PC-3 (cell line): ENCODE measurements at regions of chr16 and their contacts with region 1.

Region 1: DNA sequence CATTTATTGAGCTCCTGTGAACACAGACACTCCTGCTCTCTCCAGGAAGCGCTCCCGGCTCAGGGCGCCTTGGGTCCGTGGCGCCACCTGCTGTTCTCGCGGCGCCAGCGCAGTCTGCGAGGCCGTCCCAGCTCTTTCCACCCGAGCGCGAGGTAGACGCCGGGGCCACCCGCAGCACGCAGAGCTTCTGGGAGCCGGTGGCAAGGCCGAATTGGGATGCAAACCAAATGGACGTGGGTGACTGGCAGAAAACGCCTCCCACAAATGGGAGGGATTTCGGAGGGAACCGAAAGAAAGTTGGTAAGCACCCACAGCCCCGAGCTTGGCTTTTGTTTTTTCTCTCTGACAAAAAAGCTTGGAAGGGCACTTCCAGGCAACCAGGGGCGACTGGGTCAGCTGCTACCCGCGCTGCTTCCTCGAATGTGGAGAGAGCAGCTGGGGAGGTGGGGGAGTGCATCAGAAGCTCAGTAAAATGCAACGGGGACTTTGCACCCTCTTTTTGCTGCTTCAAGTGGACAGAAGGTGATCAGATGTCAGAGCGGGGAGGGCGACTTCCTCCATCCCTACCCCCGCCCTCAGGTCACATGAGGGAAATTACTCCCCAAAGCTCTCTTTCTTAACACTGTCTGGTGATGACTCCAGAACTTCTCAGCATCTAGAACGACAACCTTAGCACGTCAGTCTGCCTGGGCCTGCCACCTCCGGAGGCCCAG is 13.5 kb upstream of the N4BP1 start:
- DNase-seq: peak; percentile 84
- ATAC-seq: peak; percentile 99
- H3K4me3 ChIP-seq: peak overlapping the region; percentile 66
- H3K27ac ChIP-seq: no peak overlapping the region
- H3K4me1 ChIP-seq: no peaks in the 10 kb centered on the region
- H3K27me3 ChIP-seq: no peaks in the 10 kb centered on the region
- CTCF ChIP-seq: peak; percentile 86

Region 2: DNA sequence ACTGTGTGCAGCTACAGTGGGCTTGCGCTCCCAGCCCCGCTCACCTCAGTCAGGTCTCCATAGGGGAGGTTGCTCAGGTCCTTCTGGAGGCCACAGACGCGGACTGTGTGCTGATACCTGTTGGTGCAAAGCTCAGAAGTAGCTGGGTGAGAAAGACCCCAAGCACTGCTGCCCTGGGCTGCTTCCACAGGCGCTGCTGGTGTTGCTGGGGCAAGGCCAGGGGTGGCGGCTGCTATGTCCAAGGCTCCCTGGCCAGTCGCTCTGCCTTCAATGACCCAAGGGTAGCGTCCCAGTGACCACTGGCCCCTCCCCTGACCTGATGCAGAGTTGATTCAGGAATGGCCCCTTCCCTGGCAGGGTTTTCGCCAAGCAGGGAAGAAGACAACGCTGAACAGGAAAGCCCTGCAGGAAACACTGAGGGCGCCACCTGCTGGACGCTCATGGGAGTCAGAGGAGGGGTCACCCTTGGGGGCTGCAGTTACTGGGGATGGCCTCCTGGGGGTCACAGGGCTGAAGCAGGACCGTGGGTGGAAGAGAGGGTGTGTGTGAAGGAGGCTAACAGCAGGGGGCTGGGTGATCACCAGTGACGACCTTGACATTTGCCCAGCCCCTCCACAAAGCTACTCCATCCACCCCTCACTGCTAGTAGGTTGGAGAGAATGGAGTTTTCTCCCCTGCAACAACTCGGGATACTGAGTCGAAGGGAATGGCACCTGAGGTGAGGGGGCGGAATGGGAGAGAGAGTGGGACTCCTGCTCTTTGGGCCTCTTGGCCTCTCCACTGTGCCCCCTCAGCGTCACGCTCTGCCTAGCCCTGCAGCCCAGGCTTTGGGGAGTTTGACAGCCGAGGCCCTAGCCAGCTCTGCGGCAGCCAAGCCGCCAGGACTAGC is 506.0 kb before region 1 on chr16:
- CTCF ChIA-PET with region 1: interaction called, 10 read pairs
- POLR2A ChIA-PET with region 1: no interaction called
- intact Hi-C with region 1: no loop called
- DNase-seq: peak; percentile 56
- ATAC-seq: peak; percentile 43; the same call in 1 of the 2 replicates
- H3K4me3 ChIP-seq: no peak overlapping the region
- H3K27ac ChIP-seq: no peak overlapping the region
- H3K4me1 ChIP-seq: peaks cover 7% of the 10 kb centered on the region
- H3K27me3 ChIP-seq: no peaks in the 10 kb centered on the region
- CTCF ChIP-seq: peak; percentile 85

Region 3: GRCh38 chr16:48365581-48366164 is 257.8 kb before region 1 on chr16:
- CTCF ChIA-PET with region 1: interaction called, 3 read pairs
- POLR2A ChIA-PET with region 1: no interaction called
- intact Hi-C with region 1: loop called (anchors 5 kb)
- DNase-seq: peak; percentile 78
- ATAC-seq: peak; percentile 97
- H3K4me3 ChIP-seq: peak overlapping the region; percentile 81
- H3K27ac ChIP-seq: peak overlapping the region; percentile 77
- H3K4me1 ChIP-seq: peaks cover 27% of the 10 kb centered on the region
- H3K27me3 ChIP-seq: no peaks in the 10 kb centered on the region
- CTCF ChIP-seq: no peak; the same call in 1 of the 2 replicates

Region 4: DNA sequence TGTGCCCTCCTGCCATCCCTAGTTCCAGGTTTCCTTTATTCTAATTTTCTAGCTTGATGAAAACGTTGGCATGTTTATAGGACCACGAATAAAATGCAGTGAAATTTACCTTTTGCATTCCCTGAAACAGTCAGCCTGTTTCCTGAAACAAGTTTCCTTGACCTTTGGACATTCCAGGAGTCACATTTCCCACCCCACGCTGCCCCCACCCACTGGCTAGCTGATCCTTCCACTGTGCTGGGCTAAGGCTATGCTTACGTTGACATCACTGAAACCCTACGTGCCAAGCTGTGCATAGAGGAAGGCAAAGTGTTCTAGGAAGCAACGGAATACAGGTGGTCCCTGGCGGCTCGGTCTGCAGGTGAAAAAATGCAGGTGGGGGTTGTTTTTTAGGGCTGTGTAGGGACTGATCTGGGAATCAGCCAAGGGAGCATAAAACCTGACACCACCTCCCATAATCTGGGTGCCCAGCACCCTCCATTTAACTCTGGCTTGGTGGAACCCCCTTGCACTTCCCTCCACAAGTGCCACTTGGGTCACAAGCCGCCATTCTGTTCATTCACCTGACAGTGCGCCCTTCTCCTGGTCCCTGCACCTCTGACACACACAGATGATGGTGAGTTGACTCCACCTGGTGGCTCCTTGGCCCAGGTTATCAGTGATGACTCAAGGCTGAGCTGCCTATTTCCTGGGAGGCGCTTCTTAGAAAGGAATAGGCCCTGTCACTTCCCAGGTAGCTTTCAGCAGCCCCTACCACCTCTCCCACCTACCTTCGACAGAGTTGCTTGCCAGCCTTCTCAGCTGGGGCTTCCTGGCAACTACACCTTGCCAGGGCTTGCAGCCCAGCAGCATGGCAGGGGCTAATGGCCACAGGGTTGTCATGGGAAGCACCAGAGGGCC is 97.2 kb before region 1 on chr16:
- CTCF ChIA-PET with region 1: interaction called, 15 read pairs
- POLR2A ChIA-PET with region 1: no interaction called
- intact Hi-C with region 1: loop called (anchors 5 kb)
- DNase-seq: peak; percentile 81
- ATAC-seq: peak; percentile 95
- H3K4me3 ChIP-seq: no peak overlapping the region
- H3K27ac ChIP-seq: no peak overlapping the region
- H3K4me1 ChIP-seq: peaks cover 20% of the 10 kb centered on the region
- H3K27me3 ChIP-seq: no peaks in the 10 kb centered on the region
- CTCF ChIP-seq: peak; percentile 72

Region 5: GRCh38 chr16:48574763-48575162 is 48.7 kb before region 1 on chr16:
- CTCF ChIA-PET with region 1: no interaction called
- POLR2A ChIA-PET with region 1: no interaction called
- intact Hi-C with region 1: no loop called
- DNase-seq: peak; percentile 59
- ATAC-seq: peak; percentile 22; the same call in 1 of the 2 replicates
- H3K4me3 ChIP-seq: no peak overlapping the region
- H3K27ac ChIP-seq: no peak overlapping the region
- H3K4me1 ChIP-seq: peaks cover 23% of the 10 kb centered on the region; the same call in 1 of the 2 replicates
- H3K27me3 ChIP-seq: no peaks in the 10 kb centered on the region
- CTCF ChIP-seq: no peak

Region 6: GRCh38 chr16:48590476-48590875 is 33.0 kb before region 1 on chr16:
- CTCF ChIA-PET with region 1: no interaction called
- POLR2A ChIA-PET with region 1: no interaction called
- intact Hi-C with region 1: no loop called
- DNase-seq: no peak
- ATAC-seq: no peak
- H3K4me3 ChIP-seq: no peak overlapping the region
- H3K27ac ChIP-seq: no peak overlapping the region
- H3K4me1 ChIP-seq: no peaks in the 10 kb centered on the region
- H3K27me3 ChIP-seq: no peaks in the 10 kb centered on the region
- CTCF ChIP-seq: no peak

Region 7: GRCh38 chr16:48609652-48610029 is 13.8 kb before region 1 on chr16:
- CTCF ChIA-PET with region 1: interaction called, 4 read pairs
- POLR2A ChIA-PET with region 1: no interaction called
- intact Hi-C with region 1: loop called (anchors 2 kb)
- DNase-seq: no peak
- ATAC-seq: peak; percentile 37
- H3K4me3 ChIP-seq: peak overlapping the region; percentile 80
- H3K27ac ChIP-seq: peak overlapping the region; percentile 75
- H3K4me1 ChIP-seq: peaks cover 28% of the 10 kb centered on the region
- H3K27me3 ChIP-seq: no peaks in the 10 kb centered on the region
- CTCF ChIP-seq: no peak